Activated CD4-positive, alpha-beta T cell treated with anti-CD3 and anti-CD28 coated beads, Interleukin-2, amount 10 ng/mL, durations not matched to agents 7 days and 5 days (primary cell): ENCODE measurements at regions of chr16 and their contacts with region 1.

Region 1: GRCh38 chr16:88737298-88738150 is 31.2 kb downstream of the CTU2 start:
- DNase-seq: peak; percentile 78
- H3K4me3 Mint-ChIP-seq: no peak overlapping the region
- H3K27ac Mint-ChIP-seq: no peak overlapping the region
- H3K4me1 Mint-ChIP-seq: no peaks in the 10 kb centered on the region
- H3K27me3 Mint-ChIP-seq: no peaks in the 10 kb centered on the region

Region 2: GRCh38 chr16:88715312-88716190 is 22.0 kb before region 1 on chr16:
- CTCF ChIA-PET with region 1: interaction called, 10 read pairs
- POLR2A ChIA-PET with region 1: no interaction called
- DNase-seq: no peak
- H3K4me3 Mint-ChIP-seq: no peak overlapping the region
- H3K27ac Mint-ChIP-seq: no peak overlapping the region
- H3K4me1 Mint-ChIP-seq: no peaks in the 10 kb centered on the region
- H3K27me3 Mint-ChIP-seq: no peaks in the 10 kb centered on the region

Region 3: DNA sequence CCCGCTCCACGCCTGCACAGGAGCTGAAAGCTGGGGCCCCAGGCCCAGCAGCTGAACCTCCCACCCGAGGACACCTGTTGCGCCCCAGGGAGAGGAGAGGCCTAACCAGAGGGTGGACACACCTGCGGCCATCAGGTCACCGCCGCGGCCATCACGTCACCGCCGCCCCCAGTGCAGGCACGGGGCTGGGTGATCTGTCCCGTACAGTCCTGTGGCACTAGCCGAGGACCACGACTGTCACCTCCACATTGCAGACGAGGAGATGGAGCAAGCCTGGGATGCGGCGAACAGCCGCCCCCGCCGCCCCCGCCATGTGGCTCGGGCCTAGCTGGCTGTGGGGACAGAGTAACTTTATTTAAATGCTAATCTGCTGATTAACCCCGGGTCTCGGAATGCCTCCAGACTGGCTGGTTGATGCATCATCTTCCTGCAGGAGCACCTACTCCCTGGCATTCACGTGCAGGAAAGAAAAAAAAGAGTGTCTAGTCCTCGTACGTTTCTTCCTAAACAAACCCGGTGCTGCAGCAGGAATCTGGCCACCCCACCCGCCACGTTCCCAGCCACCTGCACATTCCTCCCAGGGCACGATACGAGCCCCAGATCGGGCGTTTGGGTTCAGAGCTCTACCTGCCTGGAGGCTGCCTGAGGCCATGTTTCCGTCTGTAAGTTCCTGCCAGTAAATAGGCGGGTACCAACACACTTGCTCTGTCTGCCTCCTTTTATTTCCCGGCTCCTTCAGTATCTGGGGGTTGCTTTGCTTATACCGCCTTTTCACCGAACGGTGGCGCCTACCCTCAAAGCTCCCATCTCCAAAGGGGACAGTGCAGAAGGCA is 17.6 kb after region 1 on chr16:
- CTCF ChIA-PET with region 1: interaction called, 27 read pairs
- POLR2A ChIA-PET with region 1: no interaction called
- DNase-seq: no peak
- H3K4me3 Mint-ChIP-seq: no peak overlapping the region
- H3K27ac Mint-ChIP-seq: no peak overlapping the region
- H3K4me1 Mint-ChIP-seq: peaks cover 24% of the 10 kb centered on the region
- H3K27me3 Mint-ChIP-seq: no peaks in the 10 kb centered on the region

Region 4: DNA sequence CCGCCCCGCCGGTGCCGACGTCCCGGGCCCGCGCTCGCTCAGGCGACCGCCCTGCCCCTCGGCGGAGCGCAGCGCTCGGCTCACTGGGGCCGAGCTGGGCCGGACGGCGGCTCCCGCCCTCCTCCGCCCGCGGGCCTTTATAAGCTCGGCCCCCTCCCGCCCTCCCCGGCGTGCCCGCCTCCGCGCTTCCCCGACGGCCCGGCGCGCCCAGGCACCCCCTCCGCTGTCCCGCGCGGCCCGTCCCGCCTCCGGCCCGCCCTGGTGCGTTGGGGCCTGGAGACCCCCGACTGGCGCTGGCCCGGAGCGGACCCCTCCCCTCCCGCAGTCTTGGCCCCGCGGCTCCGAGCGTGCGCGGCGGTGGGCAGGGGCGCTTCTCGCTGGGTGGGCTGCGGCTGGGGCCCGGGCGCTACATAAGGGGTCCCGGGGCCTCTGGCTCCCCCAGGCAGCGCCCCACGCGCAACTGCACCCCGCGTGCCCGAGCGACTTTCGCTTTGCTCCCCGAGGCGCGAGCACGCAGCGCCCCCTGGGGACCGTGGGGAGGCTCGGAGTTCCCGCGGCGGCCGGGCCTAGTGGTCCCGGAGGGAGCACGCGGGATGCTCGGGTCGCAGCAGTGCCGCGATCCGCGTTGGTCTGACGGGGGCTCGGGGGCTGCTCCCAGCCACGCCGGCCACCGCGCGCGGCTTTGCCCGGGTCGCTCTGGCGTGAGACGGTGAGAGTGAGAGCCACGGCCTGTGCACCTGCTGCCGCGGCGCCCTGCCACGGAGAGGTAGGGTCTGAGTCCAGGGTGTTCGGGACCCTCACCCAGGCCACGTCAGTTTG is 47.8 kb after region 1 on chr16 and contains the start of gene PIEZO1:
- CTCF ChIA-PET with region 1: interaction called, 23 read pairs
- POLR2A ChIA-PET with region 1: no interaction called
- DNase-seq: peak; percentile 81
- H3K4me3 Mint-ChIP-seq: peak within 1 kb of the TSS; percentile 79
- H3K27ac Mint-ChIP-seq: peak within 1 kb of the TSS; percentile 90
- H3K4me1 Mint-ChIP-seq: peaks cover 48% of the 10 kb centered on the region
- H3K27me3 Mint-ChIP-seq: no peaks in the 10 kb centered on the region
- total RNA-seq, gene PIEZO1: 239 to 303 TPM

Region 5: DNA sequence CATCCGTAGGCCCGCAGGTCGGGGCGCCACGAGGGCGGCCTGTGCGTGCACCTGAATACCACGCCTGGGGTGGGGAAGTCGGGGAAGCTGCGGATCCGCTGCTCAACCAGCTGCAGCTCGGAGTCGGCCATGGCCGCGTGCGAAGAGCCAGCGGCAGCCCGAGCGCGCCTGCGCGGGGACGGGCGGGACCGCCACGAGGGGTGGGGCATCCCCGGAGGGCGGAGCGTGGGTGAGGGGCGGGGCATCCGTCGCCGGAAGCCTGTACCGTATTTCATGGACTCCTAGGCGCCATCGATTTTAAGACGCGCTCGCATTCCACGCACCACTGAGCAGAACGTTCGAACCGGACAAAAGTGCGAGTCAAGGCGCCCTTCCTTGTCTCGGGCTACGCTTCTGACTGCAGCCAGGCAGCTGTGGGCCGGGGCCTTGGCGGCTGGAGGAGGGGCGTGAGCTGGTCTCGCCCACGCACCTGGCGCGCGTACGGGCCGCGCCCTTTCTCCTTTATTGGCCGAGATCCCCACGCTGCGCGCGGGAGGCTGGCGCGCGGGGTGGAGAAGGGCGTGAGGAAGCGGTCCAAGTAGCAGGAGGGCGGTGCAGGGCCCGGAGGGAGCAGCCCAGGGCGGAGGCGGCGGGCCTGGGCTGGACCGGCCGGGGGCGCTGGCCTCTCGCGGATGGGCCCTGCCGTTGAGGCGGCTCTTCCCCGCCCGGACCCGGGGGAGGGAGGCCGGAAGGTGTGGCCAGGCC is 74.4 kb after region 1 on chr16 and contains the start of gene APRT:
- CTCF ChIA-PET with region 1: interaction called, 11 read pairs
- POLR2A ChIA-PET with region 1: no interaction called
- DNase-seq: peak; percentile 96
- H3K4me3 Mint-ChIP-seq: peak within 1 kb of the TSS; percentile 85
- H3K27ac Mint-ChIP-seq: peak within 1 kb of the TSS; percentile 98
- H3K4me1 Mint-ChIP-seq: peaks cover 23% of the 10 kb centered on the region
- H3K27me3 Mint-ChIP-seq: no peaks in the 10 kb centered on the region
- total RNA-seq, gene APRT: 86.2 to 112 TPM